ENCODE measurements at regions of chr3 and their contacts with region 1.

Region 1: DNA sequence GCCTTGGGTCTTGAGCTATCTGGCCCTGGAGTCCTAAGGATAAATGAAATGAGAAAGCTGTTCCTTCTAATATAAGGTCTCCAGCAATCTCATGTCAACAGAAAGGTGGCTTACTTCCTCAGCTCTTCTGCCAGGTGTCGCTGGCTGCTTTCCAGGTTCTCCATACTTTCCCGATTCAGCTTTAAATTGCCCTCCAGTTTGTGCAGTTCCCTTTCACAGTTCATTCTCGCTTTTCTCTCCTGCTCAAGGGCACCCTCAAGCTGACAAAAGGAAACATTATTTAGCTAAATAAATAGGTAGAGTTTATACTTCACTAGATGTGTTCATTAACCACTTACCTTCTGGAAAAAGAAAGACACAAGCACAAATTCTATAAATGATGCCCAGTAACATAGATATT is 73.0 kb downstream of the MYH15 start:
- DNase-seq: peak in 1 of 2 experiments; percentile 9
- H3K4me3 ChIP-seq: no peak overlapping the region
- H3K4me3 Mint-ChIP-seq: no peak overlapping the region
- H3K27ac Mint-ChIP-seq: no peak overlapping the region
- H3K4me1 ChIP-seq: no peaks in the 10 kb centered on the region
- H3K4me1 Mint-ChIP-seq: no peaks in the 10 kb centered on the region
- H3K27me3 ChIP-seq: no peaks in the 10 kb centered on the region
- H3K27me3 Mint-ChIP-seq: no peaks in the 10 kb centered on the region
- CTCF ChIP-seq: no peak

Region 2: DNA sequence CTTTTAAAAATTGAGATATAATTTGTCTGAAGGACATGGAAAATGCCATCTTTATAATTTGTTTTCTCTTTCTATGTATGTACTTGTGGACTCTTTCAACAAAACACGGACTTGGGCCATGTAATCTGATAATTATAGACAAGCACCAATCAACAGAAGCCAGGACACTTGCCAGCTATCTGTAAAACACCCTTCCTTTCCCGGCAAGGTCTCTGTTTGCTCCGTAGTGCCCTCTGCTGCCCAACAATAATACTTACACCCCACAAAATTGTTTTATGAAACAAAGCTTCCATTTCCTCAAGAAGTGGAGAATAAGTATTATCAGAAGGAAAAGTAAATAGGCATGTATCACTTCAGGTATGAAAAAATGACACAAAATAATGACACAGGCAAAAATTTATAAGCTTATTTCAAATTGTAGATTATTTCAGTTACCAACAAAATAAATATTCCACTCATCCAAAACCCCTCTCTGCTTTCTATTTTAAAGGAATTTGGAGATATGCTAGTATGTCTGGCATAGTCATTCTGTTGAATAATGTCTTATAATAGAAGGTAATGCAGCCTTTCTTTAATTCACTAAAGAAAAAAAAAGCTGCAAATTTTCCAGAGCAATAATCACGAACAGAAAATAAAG is 40.2 kb after region 1 on chr3:
- CTCF ChIA-PET with region 1: interaction called, 11 read pairs
- POLR2A ChIA-PET with region 1: no interaction called
- intact Hi-C with region 1: loop called (anchors 1 kb)
- DNase-seq: peak; percentile 53 to 57
- H3K4me3 ChIP-seq: no peak overlapping the region
- H3K4me3 Mint-ChIP-seq: no peak overlapping the region
- H3K27ac Mint-ChIP-seq: no peak overlapping the region
- H3K4me1 ChIP-seq: no peaks in the 10 kb centered on the region
- H3K4me1 Mint-ChIP-seq: no peaks in the 10 kb centered on the region
- H3K27me3 ChIP-seq: no peaks in the 10 kb centered on the region
- H3K27me3 Mint-ChIP-seq: peaks cover 2% of the 10 kb centered on the region
- CTCF ChIP-seq: peak; percentile 59 to 70

Measured in Caco-2 (cell line).